Common myeloid progenitor, CD34-positive (primary cell): ENCODE measurements at regions of chr2 and their contacts with region 1.

Region 1: DNA sequence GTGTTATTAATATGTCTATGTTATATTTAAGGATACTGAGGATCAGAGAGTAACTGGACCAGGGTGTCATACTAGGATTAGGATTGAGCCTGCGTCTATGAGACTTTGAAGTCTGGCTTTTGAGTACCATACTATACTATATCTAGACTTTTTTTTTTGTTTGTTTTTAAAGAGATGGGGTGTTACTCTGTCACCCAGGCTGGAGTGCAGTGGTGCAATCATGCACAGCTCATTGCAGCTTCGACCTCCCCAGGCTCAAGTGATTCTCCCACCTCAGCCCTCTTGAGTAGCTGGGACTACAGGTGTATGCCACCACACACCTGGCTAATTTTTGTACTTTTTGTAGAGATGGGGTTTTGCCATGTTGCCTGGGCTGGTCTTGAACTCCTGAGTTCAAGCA is 66.2 kb upstream of the MAP4K3 start:
- DNase-seq: no peak
- H3K4me3 ChIP-seq: no peak overlapping the region
- H3K27ac ChIP-seq: no peak overlapping the region
- H3K4me1 ChIP-seq: peaks cover 0 to 11% (median 4%) of the 10 kb centered on the region in 4 experiments
- H3K27me3 ChIP-seq: no peaks in the 10 kb centered on the region

Region 2: DNA sequence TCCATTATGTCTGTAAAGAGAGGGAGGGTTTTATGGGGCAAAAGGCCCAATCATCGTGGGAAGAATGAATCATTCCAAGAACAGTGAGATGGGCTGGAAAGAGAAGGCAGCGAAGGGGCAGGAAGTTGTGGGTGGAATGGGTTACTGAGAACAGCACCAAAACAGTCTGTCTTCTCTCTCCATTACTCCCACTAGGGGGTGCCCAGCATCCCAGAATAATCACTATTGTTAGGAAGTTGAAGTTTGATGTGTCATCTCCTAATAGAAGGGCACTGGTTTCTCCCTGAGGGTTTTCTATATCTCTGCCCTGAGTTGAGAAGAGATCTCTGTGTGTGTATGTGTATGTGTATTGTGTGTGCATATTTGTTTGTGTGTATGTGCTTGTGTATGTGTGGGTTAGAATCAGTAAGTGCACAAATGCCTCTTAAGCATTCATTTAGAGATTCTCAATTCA is 10.4 kb after region 1 on chr2:
- CTCF ChIA-PET with region 1: interaction called, 11 read pairs
- POLR2A ChIA-PET with region 1: no interaction called
- DNase-seq: peak; percentile 68 to 70 (median 69)
- H3K4me3 ChIP-seq: no peak overlapping the region
- H3K27ac ChIP-seq: peak overlapping the region in 1 of 2 experiments; percentile 67
- H3K4me1 ChIP-seq: peaks cover 17 to 54% (median 36%) of the 10 kb centered on the region in 4 experiments
- H3K27me3 ChIP-seq: no peaks in the 10 kb centered on the region